ENCODE measurements at regions of chr2 and their contacts with region 1.

Region 1: GRCh38 chr2:152740743-152741328 is 22.4 kb downstream of the ARL6IP6 start:
- DNase-seq: no peak
- H3K4me3 Mint-ChIP-seq: no peak overlapping the region
- H3K27ac Mint-ChIP-seq: no peak overlapping the region
- H3K4me1 Mint-ChIP-seq: no peaks in the 10 kb centered on the region
- H3K27me3 Mint-ChIP-seq: no peaks in the 10 kb centered on the region

Region 2: DNA sequence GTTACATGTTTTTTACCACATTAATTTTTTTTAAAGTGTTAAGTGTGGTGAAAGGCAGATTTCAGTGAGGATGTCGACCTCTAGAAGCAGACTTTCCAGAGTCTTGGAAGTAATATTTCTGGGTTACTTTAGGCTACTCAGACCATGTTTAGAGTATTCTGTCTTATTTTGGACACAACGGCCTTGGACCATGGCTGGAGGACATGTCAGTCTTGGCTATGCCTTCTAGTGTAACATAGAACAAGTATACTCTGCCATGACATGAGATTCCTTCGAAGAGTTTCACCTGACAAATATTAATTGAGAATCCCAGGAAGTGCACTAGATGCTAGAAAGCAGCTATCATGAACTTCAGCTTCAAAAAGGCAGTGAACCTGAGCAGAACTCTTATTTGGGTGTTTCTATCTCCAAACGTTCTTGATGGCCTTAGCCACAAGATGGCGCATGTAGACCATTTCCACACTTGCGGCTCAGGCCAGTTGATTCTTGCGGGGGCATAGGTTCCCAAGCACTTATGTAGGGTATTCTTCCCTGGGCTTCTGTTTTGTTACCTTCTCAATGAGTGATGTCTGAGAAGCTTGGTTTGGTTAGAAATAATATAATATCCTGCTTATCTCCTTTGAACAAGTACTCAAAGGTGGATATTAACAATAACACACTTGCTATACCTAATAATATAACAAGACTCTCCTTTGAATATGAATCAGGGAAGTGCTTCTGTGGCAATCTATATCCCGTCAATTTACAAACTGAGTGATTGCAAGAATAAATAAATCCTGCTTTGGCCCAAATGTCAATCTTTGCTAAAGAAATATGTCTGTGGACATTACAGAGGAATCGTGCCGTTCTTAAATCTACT is 704.0 kb before region 1 on chr2:
- CTCF ChIA-PET with region 1: interaction called, 3 read pairs
- POLR2A ChIA-PET with region 1: no interaction called
- intact Hi-C with region 1: loop called (anchors 5 kb)
- DNase-seq: peak; percentile 69
- H3K4me3 Mint-ChIP-seq: no peak overlapping the region
- H3K27ac Mint-ChIP-seq: no peak overlapping the region
- H3K4me1 Mint-ChIP-seq: no peaks in the 10 kb centered on the region
- H3K27me3 Mint-ChIP-seq: no peaks in the 10 kb centered on the region

Region 3: GRCh38 chr2:152432206-152432653 is 308.6 kb before region 1 on chr2:
- CTCF ChIA-PET with region 1: no interaction called
- POLR2A ChIA-PET with region 1: no interaction called
- intact Hi-C with region 1: no loop called
- DNase-seq: no peak
- H3K4me3 Mint-ChIP-seq: no peak overlapping the region
- H3K27ac Mint-ChIP-seq: no peak overlapping the region
- H3K4me1 Mint-ChIP-seq: no peaks in the 10 kb centered on the region
- H3K27me3 Mint-ChIP-seq: peaks cover 3% of the 10 kb centered on the region

Region 4: GRCh38 chr2:152717228-152718075 is 23.4 kb before region 1 on chr2 and contains the start of gene PRPF40A:
- CTCF ChIA-PET with region 1: interaction called, 10 read pairs
- POLR2A ChIA-PET with region 1: no interaction called
- intact Hi-C with region 1: loop called (anchors 1 kb)
- DNase-seq: peak; percentile 99
- H3K4me3 Mint-ChIP-seq: peak within 1 kb of the TSS; percentile 100
- H3K27ac Mint-ChIP-seq: peak within 1 kb of the TSS; percentile 100
- H3K4me1 Mint-ChIP-seq: peaks cover 61% of the 10 kb centered on the region
- H3K27me3 Mint-ChIP-seq: no peaks in the 10 kb centered on the region
- total RNA-seq, gene PRPF40A: 128 to 138 TPM

Region 5: GRCh38 chr2:152804687-152805408 is 64.0 kb after region 1 on chr2:
- CTCF ChIA-PET with region 1: no interaction called
- POLR2A ChIA-PET with region 1: no interaction called
- intact Hi-C with region 1: no loop called
- DNase-seq: no peak
- H3K4me3 Mint-ChIP-seq: no peak overlapping the region
- H3K27ac Mint-ChIP-seq: no peak overlapping the region
- H3K4me1 Mint-ChIP-seq: peaks cover 3% of the 10 kb centered on the region
- H3K27me3 Mint-ChIP-seq: no peaks in the 10 kb centered on the region

Region 6: DNA sequence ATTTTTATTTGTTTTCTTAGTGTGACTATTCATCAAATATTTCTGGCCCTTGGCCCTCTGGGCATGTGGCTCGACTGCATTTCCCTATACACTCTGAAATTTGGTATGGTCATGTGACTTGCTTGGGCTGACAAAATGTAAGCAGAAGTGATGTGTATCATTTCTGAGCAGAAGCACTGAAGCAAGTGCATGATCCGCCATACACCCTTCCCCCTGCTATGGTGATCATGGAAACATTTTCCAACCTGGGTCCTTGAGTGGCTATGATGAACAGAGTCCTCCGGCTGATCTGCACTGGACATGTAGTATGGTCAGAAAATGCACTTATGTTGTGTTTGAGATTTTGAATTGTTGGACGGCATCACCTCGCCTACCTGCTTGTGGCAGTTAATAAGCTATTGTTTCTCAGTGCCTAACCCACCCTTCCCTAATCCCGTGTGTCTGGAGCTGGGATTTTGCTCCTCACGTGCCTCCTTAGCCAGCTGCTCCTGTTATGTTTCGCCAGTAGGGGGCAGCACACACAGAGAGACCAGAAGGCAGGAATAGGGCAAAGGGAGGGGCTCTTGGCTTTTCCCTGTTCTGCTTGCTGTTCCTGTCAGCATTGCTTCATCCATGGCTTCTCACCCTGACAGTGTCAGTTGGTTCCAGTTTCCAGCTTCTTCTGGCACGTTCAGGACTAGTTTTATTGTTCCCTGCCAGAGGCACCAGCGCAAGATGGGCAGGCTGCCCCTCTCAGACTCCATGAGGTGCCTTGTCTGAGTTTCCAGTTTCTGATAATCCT is 184.9 kb after region 1 on chr2:
- CTCF ChIA-PET with region 1: no interaction called
- POLR2A ChIA-PET with region 1: no interaction called
- intact Hi-C with region 1: loop called (anchors 10 kb)
- DNase-seq: peak; percentile 66
- H3K4me3 Mint-ChIP-seq: no peak overlapping the region
- H3K27ac Mint-ChIP-seq: no peak overlapping the region
- H3K4me1 Mint-ChIP-seq: no peaks in the 10 kb centered on the region
- H3K27me3 Mint-ChIP-seq: peaks cover 2% of the 10 kb centered on the region

Region 7: DNA sequence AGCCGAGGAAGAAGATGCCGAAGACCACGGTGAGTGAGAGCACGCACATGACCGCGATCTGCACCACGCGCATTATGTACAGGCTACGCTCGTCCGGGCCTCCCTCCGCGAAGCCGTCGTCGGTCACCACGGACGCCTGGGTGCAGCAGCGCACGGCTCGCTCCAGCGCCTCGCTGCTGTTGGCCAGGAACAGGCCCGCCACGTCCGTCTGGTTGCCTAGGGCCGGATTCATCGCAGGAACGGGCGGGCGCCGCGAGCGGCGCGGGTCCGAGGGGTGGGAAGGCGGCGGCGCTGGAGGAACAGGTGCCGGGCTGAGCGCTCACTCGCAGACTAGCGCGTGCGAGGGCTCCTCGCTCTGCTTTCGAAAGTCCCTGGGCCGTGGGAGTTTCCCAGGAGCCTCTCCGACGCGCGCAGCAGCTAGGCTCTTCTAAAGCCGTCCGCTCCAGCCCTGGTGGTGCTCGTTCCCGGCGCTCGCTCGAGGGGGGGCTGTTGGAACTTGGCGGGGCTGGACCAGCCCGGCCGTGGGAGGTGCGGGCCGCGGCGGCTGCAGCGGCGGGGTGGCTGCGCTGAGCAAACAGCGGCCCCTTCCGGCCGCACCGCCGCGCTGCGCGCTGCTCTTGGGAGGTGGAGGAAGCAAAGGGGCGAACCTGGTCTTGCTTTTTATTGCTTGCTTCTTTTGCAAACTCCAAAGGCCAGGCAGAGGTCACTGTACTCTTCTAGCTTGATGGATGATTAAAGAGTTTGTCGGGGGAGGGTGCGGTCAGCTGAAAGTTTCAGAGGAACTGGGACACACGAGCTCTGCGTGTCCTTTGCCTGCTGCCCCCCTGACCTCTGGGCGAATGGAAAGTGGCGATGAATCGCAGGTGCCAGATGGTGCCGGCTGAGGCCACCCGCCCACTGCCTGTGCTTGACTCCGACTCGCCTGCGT is 737.8 kb after region 1 on chr2 and contains the start of gene RPRM:
- CTCF ChIA-PET with region 1: no interaction called
- POLR2A ChIA-PET with region 1: no interaction called
- intact Hi-C with region 1: loop called (anchors 5 kb)
- DNase-seq: peak; percentile 66
- H3K4me3 Mint-ChIP-seq: peak within 1 kb of the TSS; percentile 6
- H3K27ac Mint-ChIP-seq: no peak within 1 kb of the TSS
- H3K4me1 Mint-ChIP-seq: peaks cover 17% of the 10 kb centered on the region
- H3K27me3 Mint-ChIP-seq: peaks cover 58% of the 10 kb centered on the region
- total RNA-seq, gene RPRM: not detected

Region 8: GRCh38 chr2:153519257-153519875 is 778.5 kb after region 1 on chr2:
- CTCF ChIA-PET with region 1: interaction called, 3 read pairs
- POLR2A ChIA-PET with region 1: no interaction called
- intact Hi-C with region 1: loop called (anchors 2 kb)
- DNase-seq: peak; percentile 62
- H3K4me3 Mint-ChIP-seq: no peak overlapping the region
- H3K27ac Mint-ChIP-seq: no peak overlapping the region
- H3K4me1 Mint-ChIP-seq: no peaks in the 10 kb centered on the region
- H3K27me3 Mint-ChIP-seq: peaks cover 4% of the 10 kb centered on the region